Lower leg skin (tissue), 4 donors: ENCODE measurements at regions of chr11 and their contacts with region 1.

Region 1: GRCh38 chr11:114262681-114263512 is 33.3 kb upstream of the NNMT start:
- DNase-seq: no peak
- H3K4me3 ChIP-seq: no peak overlapping the region
- CTCF ChIP-seq: no peak
- POLR2A ChIP-seq: no peak

Region 2: DNA sequence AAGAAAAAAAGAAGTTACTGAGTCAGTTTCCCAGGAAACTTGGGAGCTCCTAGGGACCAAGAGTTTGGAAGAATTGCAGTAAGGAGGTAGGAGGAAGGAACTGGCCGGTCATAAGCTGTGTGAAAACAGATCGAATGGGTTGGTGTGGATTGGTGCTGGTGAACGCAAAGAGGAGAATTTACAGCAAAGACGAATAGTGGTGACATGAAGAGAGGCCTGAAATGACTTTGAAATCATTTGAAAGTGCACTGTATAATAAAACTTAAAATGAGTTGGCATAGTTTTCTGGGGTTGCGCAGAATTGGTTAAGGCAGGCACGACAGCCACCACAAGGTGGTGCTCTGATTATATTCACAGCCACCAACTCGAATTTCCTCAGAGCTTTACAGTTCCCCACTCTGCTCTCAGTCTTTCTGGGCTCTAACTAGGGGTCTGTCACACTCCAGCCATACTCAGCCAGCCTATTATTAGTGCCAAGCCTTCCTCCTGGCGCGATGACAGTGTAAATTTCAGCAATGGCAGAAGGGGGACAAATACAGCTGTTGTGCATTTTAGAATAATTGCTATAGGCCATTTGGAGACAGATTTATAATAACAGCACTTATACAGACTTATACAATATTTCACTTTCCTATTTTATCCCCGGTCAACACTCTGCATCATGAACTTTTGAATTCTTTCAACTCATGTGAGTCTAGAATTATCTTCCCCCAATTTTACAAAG is 366.6 kb before region 1 on chr11:
- intact Hi-C with region 1: loop called (anchors 5 kb)
- DNase-seq: peak in 1 of 2 donors; percentile 81
- H3K4me3 ChIP-seq: no peak overlapping the region
- CTCF ChIP-seq: no peak
- POLR2A ChIP-seq: no peak

Region 3: DNA sequence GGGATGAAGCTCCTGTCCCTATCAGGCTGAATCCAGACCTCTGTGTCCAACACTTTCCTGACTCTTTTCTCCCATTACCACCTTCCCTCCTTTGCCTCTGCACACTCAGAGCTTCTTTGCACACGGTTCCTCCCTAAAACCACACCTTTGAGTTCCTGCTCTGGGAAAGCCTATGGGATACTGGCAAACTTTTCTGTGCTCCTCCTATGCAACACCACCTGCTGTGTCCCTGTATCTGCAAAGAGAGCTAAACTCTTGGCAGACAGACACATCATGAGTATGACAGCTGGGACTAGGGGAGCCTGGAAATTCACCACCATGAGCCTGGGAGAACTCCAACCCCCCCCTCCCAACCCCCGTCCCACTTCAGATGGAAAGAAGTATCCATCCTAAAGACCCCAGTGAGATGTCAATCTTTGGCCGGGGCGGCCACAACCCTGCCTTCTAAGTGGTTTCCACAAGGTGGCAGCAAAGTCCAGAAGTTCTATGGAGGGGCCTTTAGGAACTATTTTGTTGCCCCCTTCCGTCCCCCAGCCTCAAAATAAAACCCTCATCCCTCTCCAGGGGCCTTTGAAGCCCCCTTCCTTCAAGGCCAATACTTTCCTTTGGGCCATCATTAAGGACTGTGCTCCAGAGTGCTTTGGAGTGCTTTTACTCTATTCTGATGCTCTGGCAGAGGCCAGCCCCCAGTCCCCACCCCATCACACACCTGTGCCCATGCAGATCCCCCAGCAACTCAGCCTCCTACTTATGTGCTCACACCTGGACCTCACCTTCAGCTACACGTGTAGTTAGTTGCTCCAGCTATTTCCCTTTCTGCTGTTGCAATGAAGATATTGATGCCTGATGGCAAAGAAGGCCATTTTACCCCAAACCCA is 268.6 kb before region 1 on chr11:
- intact Hi-C with region 1: loop called (anchors 10 kb)
- DNase-seq: no peak
- H3K4me3 ChIP-seq: no peak overlapping the region
- CTCF ChIP-seq: no peak
- POLR2A ChIP-seq: no peak

Region 4: GRCh38 chr11:114219559-114220349 is 43.1 kb before region 1 on chr11:
- intact Hi-C with region 1: no loop called
- DNase-seq: no peak
- H3K4me3 ChIP-seq: no peak overlapping the region
- CTCF ChIP-seq: no peak
- POLR2A ChIP-seq: no peak